OCI-LY7 (cell line): ENCODE measurements at regions of chrX and their contacts with region 1.

Region 1: DNA sequence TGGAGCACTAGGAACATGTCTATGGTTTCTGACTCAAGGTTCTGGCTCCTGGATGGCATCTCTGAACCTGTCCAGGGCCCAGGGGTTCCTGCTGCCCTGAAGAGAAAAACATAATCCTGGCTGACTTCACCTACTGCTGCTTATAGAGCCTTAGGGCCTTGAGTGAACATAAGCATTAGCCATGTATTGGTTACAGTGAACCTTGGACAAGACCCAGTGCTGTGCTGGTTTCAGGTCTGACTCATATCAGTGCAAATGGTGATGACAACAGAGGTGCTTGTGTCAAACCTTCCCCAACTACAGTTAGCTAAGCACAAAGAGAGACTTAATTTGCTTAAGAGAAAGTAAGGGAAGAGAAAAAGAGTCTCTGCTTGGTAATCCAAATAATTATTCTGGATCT is 1047.2 kb downstream of the GLUD2 start:
- DNase-seq: no peak
- H3K4me3 ChIP-seq: no peak overlapping the region
- H3K27ac ChIP-seq: no peak overlapping the region
- H3K4me1 ChIP-seq: no peaks in the 10 kb centered on the region
- CTCF ChIP-seq: no peak

Region 2: DNA sequence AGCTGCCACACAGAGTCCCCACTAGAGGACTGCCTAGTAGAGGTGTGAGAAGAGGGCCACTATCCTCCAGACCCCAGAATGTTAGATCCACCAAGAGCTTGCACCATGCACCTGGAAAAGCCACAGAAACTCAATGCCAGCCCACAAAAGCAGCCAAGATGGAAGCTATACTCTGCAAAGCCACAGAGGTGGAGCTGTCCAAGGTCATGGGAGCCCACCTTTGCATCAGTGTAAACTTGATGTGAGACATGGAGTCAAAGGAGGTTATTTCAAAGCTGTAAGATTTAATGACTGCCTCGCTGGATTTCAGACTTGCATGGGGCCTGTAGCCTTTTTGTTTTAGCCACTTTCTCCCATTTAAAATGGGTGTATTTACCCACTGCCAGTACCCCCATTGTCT is 59.4 kb after region 1 on chrX:
- CTCF ChIA-PET with region 1: no interaction called
- POLR2A ChIA-PET with region 1: no interaction called
- intact Hi-C with region 1: loop called (anchors 10 kb)
- DNase-seq: no peak
- H3K4me3 ChIP-seq: no peak overlapping the region
- H3K27ac ChIP-seq: no peak overlapping the region
- H3K4me1 ChIP-seq: no peaks in the 10 kb centered on the region
- CTCF ChIP-seq: no peak

Region 3: DNA sequence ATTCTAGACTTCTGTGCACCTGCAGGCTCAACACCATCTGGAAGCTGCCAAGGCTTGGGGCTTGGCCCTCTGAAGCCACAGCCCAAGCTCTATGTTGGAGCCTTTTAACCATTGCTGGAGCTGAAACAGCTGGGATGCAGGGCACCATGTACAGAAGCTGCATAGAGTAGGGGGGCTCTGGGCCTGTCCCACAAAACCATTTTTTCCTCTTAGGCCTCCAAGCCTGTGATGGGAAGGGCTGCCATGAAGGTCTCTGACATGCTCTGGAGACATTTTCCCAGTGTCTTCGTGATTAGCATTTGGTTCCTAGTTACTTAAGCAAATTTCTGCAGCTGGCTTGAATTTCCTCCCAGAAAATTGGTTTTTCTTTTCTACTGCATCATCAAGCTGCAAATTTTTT is 90.2 kb after region 1 on chrX:
- CTCF ChIA-PET with region 1: no interaction called
- POLR2A ChIA-PET with region 1: no interaction called
- intact Hi-C with region 1: no loop called
- DNase-seq: no peak
- H3K4me3 ChIP-seq: no peak overlapping the region
- H3K27ac ChIP-seq: no peak overlapping the region
- H3K4me1 ChIP-seq: no peaks in the 10 kb centered on the region
- CTCF ChIP-seq: no peak